ENCODE measurements at regions of chr20 and their contacts with region 1.

Region 1: GRCh38 chr20:49610701-49611538 is 43.0 kb upstream of the PTGIS start:
- DNase-seq: peak in 1 of 2 donors; percentile 83
- H3K4me3 ChIP-seq: peak overlapping the region in 1 of 2 donors; percentile 23
- H3K27ac ChIP-seq: no peak overlapping the region
- H3K4me1 ChIP-seq: peaks cover 0 to 41% (median 24%) of the 10 kb centered on the region in 4 donors
- H3K27me3 ChIP-seq: no peaks in the 10 kb centered on the region
- CTCF ChIP-seq: peak; percentile 100

Region 2: DNA sequence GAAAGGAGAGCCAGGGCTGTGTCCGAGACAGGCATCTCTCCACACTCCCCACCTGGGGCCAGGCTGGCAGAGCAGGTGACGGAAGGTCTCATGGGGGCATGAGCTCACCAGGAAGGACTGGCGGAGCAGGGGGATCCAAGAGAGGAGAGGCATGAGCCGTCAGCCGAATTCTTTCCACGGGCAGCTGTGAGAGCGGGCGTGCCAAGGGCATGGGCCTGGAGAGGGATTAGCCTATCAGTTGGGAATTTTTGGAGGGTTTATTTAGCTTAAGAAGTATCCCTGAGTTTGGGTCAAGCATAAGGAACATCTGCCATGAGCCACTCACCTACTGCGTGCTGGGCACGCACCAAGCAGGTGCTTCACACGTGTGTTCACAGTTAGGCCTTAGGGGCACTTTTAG is 272.9 kb before region 1 on chr20:
- intact Hi-C with region 1: loop called (anchors 2 kb)
- DNase-seq: no peak
- H3K4me3 ChIP-seq: no peak overlapping the region
- H3K27ac ChIP-seq: no peak overlapping the region
- H3K4me1 ChIP-seq: peaks cover 0 to 16% (median 3%) of the 10 kb centered on the region in 4 donors
- H3K27me3 ChIP-seq: peaks cover 0 to 7% of the 10 kb centered on the region in 2 donors
- CTCF ChIP-seq: no peak

Region 3: DNA sequence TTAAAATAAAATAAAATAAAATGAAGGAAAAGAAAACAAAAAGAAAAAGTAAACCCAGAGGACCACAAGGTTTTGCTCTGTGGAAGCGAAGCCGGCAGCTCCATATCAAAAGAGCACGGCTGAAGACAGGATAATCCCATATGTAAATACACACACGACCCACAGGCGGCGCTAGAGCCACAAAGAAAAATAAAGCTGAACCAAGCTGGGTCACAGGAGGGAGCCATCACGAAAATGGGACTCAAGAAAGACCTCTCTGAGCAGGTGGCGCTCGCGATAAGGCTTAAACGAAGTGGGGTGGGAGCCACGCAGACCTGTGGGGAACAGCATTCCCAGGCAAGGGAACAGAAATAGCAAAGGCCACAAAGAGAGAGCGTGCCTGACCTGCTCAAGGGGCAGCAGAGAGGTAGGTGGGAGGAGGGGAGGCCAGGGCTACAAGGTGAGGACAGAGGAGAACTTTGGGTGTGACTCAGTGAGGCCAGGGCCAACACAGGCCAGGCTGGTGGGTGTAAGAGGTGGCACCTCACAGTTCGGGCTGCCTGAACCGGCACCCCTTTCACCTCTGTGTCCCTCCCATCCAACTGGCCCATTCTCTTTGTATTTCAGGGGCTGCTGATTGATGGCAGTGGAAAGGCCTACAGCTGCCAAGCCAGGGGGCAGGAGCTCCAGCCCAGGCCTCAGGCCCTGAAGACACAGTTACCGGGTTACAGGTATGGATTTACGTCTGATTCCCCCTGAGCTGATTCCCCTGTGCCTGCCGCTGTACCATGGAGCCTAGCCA is 69.0 kb before region 1 on chr20:
- intact Hi-C with region 1: loop called (anchors 1 kb)
- DNase-seq: peak; percentile 78 to 87
- H3K4me3 ChIP-seq: no peak overlapping the region
- H3K27ac ChIP-seq: peak overlapping the region; percentile 68 to 99
- H3K4me1 ChIP-seq: peaks cover 0 to 44% (median 11%) of the 10 kb centered on the region in 4 donors
- H3K27me3 ChIP-seq: no peaks in the 10 kb centered on the region
- CTCF ChIP-seq: peak; percentile 90 to 99

Region 4: DNA sequence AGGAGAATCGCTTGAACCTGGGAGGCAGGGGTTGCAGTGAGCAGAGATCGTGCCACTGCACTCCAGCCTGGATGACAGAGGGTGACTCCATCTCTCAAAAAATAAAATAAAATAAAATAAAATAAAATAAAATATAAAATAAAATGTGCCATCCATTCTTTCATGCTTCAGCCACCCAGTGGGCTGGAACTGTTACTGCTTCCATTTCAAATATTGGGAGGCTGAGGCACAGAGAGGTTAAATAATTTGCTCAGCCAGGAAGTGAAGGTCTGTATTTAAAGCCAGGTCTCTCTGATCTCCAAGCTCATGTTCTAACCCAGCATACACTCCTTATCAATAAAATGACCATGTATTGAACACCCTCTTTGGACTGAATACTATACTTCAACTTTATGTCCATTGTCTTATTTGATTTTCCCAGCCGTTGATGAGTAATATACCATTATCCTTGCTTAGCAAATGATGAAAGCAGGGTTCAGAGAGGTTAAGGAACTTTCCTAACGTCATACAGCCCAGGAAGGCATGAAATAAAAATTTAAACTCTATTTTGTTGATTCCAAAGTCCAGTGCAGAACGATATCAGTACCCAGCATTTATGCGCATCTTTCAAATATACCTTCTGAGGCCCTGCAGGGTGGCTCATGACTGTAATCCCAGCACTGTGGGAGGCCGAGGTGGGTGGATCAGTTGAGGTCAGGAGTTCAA is 175.9 kb after region 1 on chr20:
- intact Hi-C with region 1: no loop called
- DNase-seq: no peak
- H3K4me3 ChIP-seq: no peak overlapping the region
- H3K27ac ChIP-seq: no peak overlapping the region
- H3K4me1 ChIP-seq: no peaks in the 10 kb centered on the region
- H3K27me3 ChIP-seq: no peaks in the 10 kb centered on the region
- CTCF ChIP-seq: peak in 1 of 2 experiments; percentile 12

Region 5: DNA sequence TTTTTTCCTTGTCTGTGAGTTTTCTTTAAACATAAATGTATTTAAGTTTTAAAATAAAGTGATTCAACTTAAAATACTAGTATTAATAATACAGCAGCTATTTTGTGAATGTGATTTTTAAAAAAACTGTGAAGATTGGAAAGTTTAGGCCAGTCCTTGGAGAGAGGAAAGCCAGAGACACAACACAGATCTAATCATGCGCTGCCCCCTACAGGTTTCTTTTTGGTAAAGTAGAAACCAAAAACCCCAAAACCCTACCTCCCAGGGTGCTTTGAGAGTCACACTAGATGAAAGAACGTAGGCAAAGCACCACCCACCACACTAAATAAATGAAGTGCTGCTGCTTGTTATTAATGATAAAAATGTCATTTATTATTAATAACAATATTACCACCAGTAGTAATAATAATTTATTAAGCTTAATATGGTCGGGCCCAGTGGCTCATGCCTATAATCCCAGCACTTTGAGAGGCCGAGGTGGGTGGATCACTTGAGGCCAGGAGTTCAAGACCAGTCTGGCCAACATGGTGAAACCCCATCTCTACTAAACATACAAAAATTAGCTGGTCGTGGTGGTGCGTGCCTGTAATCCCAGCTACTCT is 235.4 kb after region 1 on chr20:
- intact Hi-C with region 1: loop called (anchors 10 kb)
- DNase-seq: no peak
- H3K4me3 ChIP-seq: no peak overlapping the region
- H3K27ac ChIP-seq: no peak overlapping the region
- H3K4me1 ChIP-seq: peaks cover 0 to 32% (median 10%) of the 10 kb centered on the region in 4 donors
- H3K27me3 ChIP-seq: no peaks in the 10 kb centered on the region
- CTCF ChIP-seq: peak; percentile 48 to 59

Region 6: DNA sequence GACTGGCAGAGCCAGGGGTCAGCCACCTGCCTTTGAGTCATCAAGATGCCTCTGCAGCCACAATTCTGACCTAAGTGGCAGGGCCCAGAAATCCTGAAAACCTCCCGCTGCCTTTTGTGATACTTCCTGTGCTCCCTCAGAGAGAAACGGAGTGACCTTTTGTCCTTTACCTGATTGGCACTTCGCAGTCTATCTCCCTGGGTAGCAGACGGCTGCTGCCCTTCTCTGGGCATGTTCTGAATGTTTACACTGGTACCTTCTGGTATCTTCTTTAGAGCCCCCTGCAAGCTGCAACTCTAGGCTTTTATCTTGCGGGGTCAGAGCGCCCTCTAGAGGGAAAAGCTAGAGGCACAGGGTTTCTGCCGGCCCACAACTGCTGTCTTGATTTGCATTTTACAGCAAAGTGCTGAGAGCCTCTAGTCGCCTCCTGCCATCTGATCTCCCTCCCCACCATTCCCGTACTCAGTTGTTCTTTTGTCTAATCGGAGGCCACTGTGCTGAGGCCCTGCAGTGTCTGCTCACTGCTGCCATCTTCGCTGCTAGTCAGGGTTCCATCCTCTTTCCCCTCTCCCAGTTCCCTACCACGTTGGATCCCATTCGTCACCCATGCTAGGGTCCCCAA is 277.5 kb after region 1 on chr20:
- intact Hi-C with region 1: loop called (anchors 5 kb)
- DNase-seq: peak in 1 of 2 donors; percentile 72
- H3K4me3 ChIP-seq: no peak overlapping the region
- H3K27ac ChIP-seq: peak overlapping the region; percentile 77 to 87
- H3K4me1 ChIP-seq: peaks cover 0 to 43% (median 42%) of the 10 kb centered on the region in 4 donors
- H3K27me3 ChIP-seq: no peaks in the 10 kb centered on the region
- CTCF ChIP-seq: peak; percentile 75 to 85

Region 7: DNA sequence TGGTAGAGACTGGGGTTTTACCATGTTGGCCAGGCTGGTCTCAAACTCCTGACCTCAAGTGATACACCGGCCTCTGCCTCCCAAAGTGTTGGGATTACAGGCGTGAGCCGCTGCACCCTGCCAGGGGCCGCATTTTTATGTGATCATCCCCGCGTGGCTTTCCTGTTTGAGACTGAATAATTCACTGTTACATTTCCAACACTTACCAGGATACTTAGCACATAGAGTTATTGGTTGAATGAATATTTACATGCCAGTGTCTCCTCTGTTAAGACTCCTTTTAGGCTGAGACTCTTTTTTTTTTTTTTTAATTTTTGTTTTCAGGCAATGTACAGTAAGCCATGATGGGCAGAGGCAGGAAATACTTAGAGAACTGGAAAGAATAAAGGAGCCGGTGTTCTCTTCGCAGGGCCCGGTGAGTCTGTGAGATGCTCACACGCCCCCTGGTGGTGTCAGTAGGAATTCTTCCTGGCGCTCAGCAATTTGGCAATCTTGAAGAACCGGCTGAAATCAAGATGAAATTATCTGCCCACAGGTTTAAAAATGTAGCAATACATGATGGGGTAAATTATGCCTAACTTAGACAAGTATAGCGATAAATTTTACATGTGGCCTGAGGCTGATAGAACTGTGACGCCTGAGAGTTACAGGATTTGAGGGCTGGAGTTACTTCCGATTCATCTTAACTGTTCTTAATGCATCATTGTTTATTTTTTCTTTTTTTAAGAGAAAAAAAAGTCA is 317.7 kb after region 1 on chr20:
- intact Hi-C with region 1: loop called (anchors 2 kb)
- DNase-seq: peak; percentile 81 to 87
- H3K4me3 ChIP-seq: no peak overlapping the region
- H3K27ac ChIP-seq: no peak overlapping the region
- H3K4me1 ChIP-seq: no peaks in the 10 kb centered on the region
- H3K27me3 ChIP-seq: no peaks in the 10 kb centered on the region
- CTCF ChIP-seq: peak; percentile 85 to 93